ENCODE measurements at regions of chr9 and their contacts with region 1.

Region 1: GRCh38 chr9:5949103-5949699 is 58.5 kb downstream of the MLANA start:
- DNase-seq: peak in 6 of 9 donors; percentile 5 to 27 (median 16)
- ATAC-seq: peak; percentile 81
- H3K4me3 ChIP-seq: no peak overlapping the region
- H3K4me3 Mint-ChIP-seq: peak overlapping the region; percentile 6 to 71 (median 40)
- H3K27ac ChIP-seq: no peak overlapping the region
- H3K27ac Mint-ChIP-seq: peak overlapping the region in 2 of 9 donors; percentile 25 to 48
- H3K4me1 ChIP-seq: peaks cover 8 to 14% of the 10 kb centered on the region in 2 donors
- H3K4me1 Mint-ChIP-seq: peaks cover 5 to 42% (median 24%) of the 10 kb centered on the region in 7 donors
- H3K27me3 ChIP-seq: no peaks in the 10 kb centered on the region
- H3K27me3 Mint-ChIP-seq: no peaks in the 10 kb centered on the region

Region 2: GRCh38 chr9:5931657-5932056 is 17.5 kb before region 1 on chr9:
- CTCF ChIA-PET with region 1: interaction called, 3 read pairs
- POLR2A ChIA-PET with region 1: no interaction called
- intact Hi-C with region 1: loop called in 1 of 2 experiments (anchors 2 kb)
- DNase-seq: no peak
- ATAC-seq: no peak
- H3K4me3 ChIP-seq: no peak overlapping the region
- H3K4me3 Mint-ChIP-seq: no peak overlapping the region
- H3K27ac ChIP-seq: no peak overlapping the region
- H3K27ac Mint-ChIP-seq: no peak overlapping the region
- H3K4me1 ChIP-seq: no peaks in the 10 kb centered on the region
- H3K4me1 Mint-ChIP-seq: peaks cover 0 to 5% (median 0%) of the 10 kb centered on the region in 7 donors
- H3K27me3 ChIP-seq: no peaks in the 10 kb centered on the region
- H3K27me3 Mint-ChIP-seq: no peaks in the 10 kb centered on the region

Region 3: DNA sequence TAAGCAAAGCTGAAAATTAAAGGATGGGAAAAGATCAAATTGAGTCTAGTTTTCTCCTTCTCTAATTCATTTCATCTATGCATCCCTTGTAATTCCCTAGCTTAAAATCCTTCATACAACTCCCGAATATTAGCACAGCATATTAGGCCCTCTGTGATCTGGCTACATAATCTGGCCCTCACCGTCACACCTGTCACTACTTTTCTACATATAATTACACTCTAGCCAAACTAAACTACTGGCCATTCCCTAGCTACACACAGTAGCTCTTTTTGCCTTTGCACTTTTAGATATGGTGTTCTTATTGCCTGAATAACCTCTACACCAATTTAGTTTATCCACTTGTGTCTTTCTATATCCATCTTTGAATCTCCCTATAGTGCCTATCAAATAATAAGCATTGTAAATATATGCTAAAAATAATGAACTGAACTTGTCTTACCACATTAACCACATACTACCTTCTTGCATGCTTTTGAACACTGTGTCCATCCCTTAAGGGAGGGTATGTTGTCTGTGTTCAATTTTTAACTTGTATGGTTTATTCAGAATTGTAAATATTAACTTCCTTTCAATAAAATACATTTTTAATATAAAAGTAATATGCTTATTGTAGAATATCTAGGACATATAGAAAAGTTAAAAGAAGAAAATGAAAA is 50.4 kb after region 1 on chr9:
- CTCF ChIA-PET with region 1: no interaction called
- POLR2A ChIA-PET with region 1: no interaction called
- intact Hi-C with region 1: loop called in 1 of 2 experiments (anchors 5 kb)
- DNase-seq: no peak
- ATAC-seq: no peak
- H3K4me3 ChIP-seq: no peak overlapping the region
- H3K4me3 Mint-ChIP-seq: peak overlapping the region in 1 of 10 donors; percentile 9
- H3K27ac ChIP-seq: no peak overlapping the region
- H3K27ac Mint-ChIP-seq: no peak overlapping the region
- H3K4me1 ChIP-seq: peaks cover 10 to 12% of the 10 kb centered on the region in 2 donors
- H3K4me1 Mint-ChIP-seq: peaks cover 40 to 84% (median 71%) of the 10 kb centered on the region in 7 donors
- H3K27me3 ChIP-seq: no peaks in the 10 kb centered on the region
- H3K27me3 Mint-ChIP-seq: no peaks in the 10 kb centered on the region

Region 4: GRCh38 chr9:6243746-6244145 is 294.5 kb after region 1 on chr9:
- CTCF ChIA-PET with region 1: no interaction called
- POLR2A ChIA-PET with region 1: no interaction called
- intact Hi-C with region 1: no loop called
- DNase-seq: no peak
- ATAC-seq: no peak
- H3K4me3 ChIP-seq: no peak overlapping the region
- H3K4me3 Mint-ChIP-seq: no peak overlapping the region
- H3K27ac ChIP-seq: no peak overlapping the region
- H3K27ac Mint-ChIP-seq: no peak overlapping the region
- H3K4me1 ChIP-seq: no peaks in the 10 kb centered on the region
- H3K4me1 Mint-ChIP-seq: no peaks in the 10 kb centered on the region
- H3K27me3 ChIP-seq: no peaks in the 10 kb centered on the region
- H3K27me3 Mint-ChIP-seq: peaks cover 8 to 29% (median 25%) of the 10 kb centered on the region in 5 donors

Measured in naive thymus-derived CD4-positive, alpha-beta T cell (primary cell).